ENCODE measurements at regions of chr4 and their contacts with region 1.

Region 1: DNA sequence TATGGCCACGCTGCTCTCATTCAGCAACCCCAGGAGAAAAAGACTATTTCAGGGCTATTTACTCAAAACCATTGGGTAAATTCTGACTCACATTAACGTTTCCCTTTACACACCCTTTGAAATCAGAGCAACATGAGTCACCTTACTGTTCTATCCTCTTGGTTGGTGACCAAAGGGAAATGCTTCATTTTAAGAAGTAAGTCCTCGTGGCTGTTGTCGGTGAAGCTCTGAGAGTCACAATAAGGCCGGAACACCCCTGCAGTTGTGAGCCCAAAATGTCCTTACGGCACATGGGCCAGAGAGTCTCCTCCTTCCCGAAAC is 56.3 kb upstream of the SPRY1 start:
- DNase-seq: peak; percentile 92
- H3K4me3 ChIP-seq: no peak overlapping the region
- H3K27ac ChIP-seq: peak overlapping the region; percentile 90
- H3K4me1 ChIP-seq: peaks cover 58% of the 10 kb centered on the region
- H3K27me3 ChIP-seq: no peaks in the 10 kb centered on the region
- CTCF ChIP-seq: no peak
- POLR2A ChIP-seq: peak; percentile 29

Region 2: DNA sequence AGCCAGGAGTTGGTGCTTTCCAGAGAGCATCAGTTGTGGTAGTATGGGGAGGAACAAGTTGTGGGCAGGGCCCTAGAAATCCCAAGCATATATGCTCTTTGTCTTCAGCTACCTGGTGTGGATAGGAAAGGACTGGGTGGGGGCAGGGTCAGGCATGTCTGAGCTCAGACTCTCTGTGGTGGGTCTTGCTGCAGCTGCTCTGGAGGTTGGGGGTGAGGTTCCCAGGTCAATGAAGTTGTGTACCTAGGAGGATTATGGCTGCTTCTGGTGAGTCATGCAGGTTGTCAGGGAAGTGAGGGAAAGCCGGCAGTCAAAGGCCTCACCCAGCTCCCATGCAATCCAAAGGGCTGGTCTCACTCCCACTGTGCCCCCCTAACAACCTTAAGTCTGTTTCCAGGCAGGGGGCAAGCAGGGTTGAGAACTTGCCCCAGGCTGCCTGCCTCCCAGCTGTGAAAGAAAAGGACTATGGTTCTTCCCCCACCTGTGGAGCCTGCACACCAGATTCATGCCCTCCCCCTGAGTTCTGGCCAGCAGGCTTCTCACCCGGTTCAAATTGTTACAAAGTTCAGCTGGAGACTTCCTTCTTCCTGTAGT is 1929.1 kb before region 1 on chr4:
- CTCF ChIA-PET with region 1: no interaction called
- POLR2A ChIA-PET with region 1: no interaction called
- dilution Hi-C with region 1: no loop called
- intact Hi-C with region 1: no loop called
- DNase-seq: no peak
- H3K4me3 ChIP-seq: no peak overlapping the region
- H3K27ac ChIP-seq: no peak overlapping the region
- H3K4me1 ChIP-seq: no peaks in the 10 kb centered on the region
- H3K27me3 ChIP-seq: no peaks in the 10 kb centered on the region
- CTCF ChIP-seq: no peak
- POLR2A ChIP-seq: no peak

Region 3: GRCh38 chr4:123229286-123229685 is 111.1 kb before region 1 on chr4:
- CTCF ChIA-PET with region 1: no interaction called
- POLR2A ChIA-PET with region 1: no interaction called
- dilution Hi-C with region 1: no loop called
- intact Hi-C with region 1: no loop called
- DNase-seq: no peak
- H3K4me3 ChIP-seq: no peak overlapping the region
- H3K27ac ChIP-seq: no peak overlapping the region
- H3K4me1 ChIP-seq: peaks cover 6% of the 10 kb centered on the region
- H3K27me3 ChIP-seq: no peaks in the 10 kb centered on the region
- CTCF ChIP-seq: no peak
- POLR2A ChIP-seq: no peak

Region 4: GRCh38 chr4:123250843-123251242 is 89.5 kb before region 1 on chr4:
- CTCF ChIA-PET with region 1: no interaction called
- POLR2A ChIA-PET with region 1: no interaction called
- dilution Hi-C with region 1: no loop called
- intact Hi-C with region 1: loop called (anchors 2 kb)
- DNase-seq: peak; percentile 94
- H3K4me3 ChIP-seq: no peak overlapping the region
- H3K27ac ChIP-seq: no peak overlapping the region
- H3K4me1 ChIP-seq: peaks cover 28% of the 10 kb centered on the region
- H3K27me3 ChIP-seq: no peaks in the 10 kb centered on the region
- CTCF ChIP-seq: no peak
- POLR2A ChIP-seq: no peak

Region 5: GRCh38 chr4:123312116-123312515 is 28.2 kb before region 1 on chr4:
- CTCF ChIA-PET with region 1: no interaction called
- POLR2A ChIA-PET with region 1: no interaction called
- dilution Hi-C with region 1: no loop called
- intact Hi-C with region 1: no loop called
- DNase-seq: no peak
- H3K4me3 ChIP-seq: no peak overlapping the region
- H3K27ac ChIP-seq: no peak overlapping the region
- H3K4me1 ChIP-seq: no peaks in the 10 kb centered on the region
- H3K27me3 ChIP-seq: no peaks in the 10 kb centered on the region
- CTCF ChIP-seq: no peak
- POLR2A ChIP-seq: no peak

Region 6: GRCh38 chr4:123361195-123361861 is 21.0 kb after region 1 on chr4:
- CTCF ChIA-PET with region 1: interaction called, 4 read pairs
- POLR2A ChIA-PET with region 1: no interaction called
- dilution Hi-C with region 1: no loop called
- intact Hi-C with region 1: loop called (anchors 1 kb)
- DNase-seq: peak; percentile 93
- H3K4me3 ChIP-seq: no peak overlapping the region
- H3K27ac ChIP-seq: peak overlapping the region; percentile 98
- H3K4me1 ChIP-seq: peaks cover 24% of the 10 kb centered on the region
- H3K27me3 ChIP-seq: no peaks in the 10 kb centered on the region
- CTCF ChIP-seq: no peak
- POLR2A ChIP-seq: no peak

Region 7: GRCh38 chr4:123390846-123391456 is 50.6 kb after region 1 on chr4:
- CTCF ChIA-PET with region 1: interaction called, 3 read pairs
- POLR2A ChIA-PET with region 1: no interaction called
- dilution Hi-C with region 1: no loop called
- intact Hi-C with region 1: loop called (anchors 1 kb)
- DNase-seq: peak; percentile 46
- H3K4me3 ChIP-seq: no peak overlapping the region
- H3K27ac ChIP-seq: no peak overlapping the region
- H3K4me1 ChIP-seq: peaks cover 31% of the 10 kb centered on the region
- H3K27me3 ChIP-seq: no peaks in the 10 kb centered on the region
- CTCF ChIP-seq: peak; percentile 19 to 29
- POLR2A ChIP-seq: no peak

Region 8: DNA sequence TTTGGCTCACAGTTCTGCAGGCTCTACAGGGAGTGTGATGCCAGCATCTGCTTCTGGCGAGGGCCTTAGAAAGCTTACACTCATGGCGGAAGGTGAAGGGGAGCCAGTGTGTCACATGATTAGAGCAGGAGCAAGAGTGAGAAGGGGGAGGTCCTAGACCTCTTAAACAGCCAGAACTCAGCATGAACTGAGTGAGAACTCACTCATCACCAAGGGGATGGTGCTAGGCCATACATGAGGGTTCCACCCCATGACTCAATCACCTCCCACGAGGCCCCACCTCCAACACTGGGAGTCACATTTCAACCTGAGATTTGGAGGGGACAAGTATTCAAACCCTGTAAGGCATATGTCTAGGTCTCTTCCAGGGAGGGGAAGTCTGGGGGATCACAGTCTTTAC is 89.7 kb after region 1 on chr4:
- CTCF ChIA-PET with region 1: no interaction called
- POLR2A ChIA-PET with region 1: no interaction called
- dilution Hi-C with region 1: no loop called
- intact Hi-C with region 1: no loop called
- DNase-seq: no peak
- H3K4me3 ChIP-seq: no peak overlapping the region
- H3K27ac ChIP-seq: no peak overlapping the region
- H3K4me1 ChIP-seq: no peaks in the 10 kb centered on the region
- H3K27me3 ChIP-seq: no peaks in the 10 kb centered on the region
- CTCF ChIP-seq: no peak
- POLR2A ChIP-seq: no peak

Region 9: DNA sequence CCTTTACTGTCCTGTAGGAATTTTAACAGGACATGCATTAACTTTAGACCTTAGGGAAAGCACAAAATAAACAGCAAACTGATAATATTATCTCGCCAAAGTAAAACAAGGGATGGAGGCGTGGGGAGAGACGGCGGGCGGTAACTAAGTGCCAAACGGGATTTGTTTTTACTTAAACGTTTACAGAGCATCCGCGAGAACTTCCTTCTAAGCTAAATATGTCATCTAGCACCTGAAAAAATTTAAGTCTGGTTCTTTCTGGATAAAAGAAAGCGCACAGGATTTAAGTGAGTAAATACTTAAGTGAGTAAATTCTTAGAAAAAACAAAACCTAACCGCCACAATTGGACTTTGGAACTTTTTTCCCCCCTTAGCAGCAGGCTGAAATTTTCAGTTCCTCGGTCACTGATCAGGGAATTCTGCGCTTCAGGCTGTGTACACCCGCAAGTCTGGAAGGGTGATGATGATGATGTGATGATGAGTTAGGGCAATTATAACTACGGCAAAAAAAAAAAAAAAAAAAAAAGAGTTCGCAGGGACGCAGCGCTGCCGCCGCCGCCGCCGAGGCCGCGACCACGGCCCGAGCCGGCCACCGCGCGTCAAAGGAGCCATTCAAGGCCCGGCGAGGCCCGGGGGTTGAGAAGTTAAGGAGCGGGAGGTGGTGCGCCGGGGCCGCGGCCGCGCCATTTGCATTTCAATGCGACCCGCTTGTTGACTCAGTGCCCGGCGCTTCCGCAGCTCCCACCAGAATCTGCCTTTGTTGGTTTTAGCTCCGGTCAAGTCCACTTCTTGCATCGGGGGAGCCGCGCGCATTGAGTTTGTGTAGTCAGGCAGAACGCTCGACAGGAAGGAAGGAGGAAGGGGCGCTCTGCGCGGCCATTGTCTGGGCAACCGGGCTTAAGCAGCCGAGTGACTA is 165.0 kb after region 1 on chr4:
- CTCF ChIA-PET with region 1: no interaction called
- POLR2A ChIA-PET with region 1: no interaction called
- dilution Hi-C with region 1: no loop called
- intact Hi-C with region 1: loop called (anchors 5 kb)
- DNase-seq: peak; percentile 74
- H3K4me3 ChIP-seq: peak overlapping the region; percentile 35 to 72 (median 61)
- H3K27ac ChIP-seq: peak overlapping the region; percentile 65
- H3K4me1 ChIP-seq: peaks cover 16% of the 10 kb centered on the region
- H3K27me3 ChIP-seq: no peaks in the 10 kb centered on the region
- CTCF ChIP-seq: no peak
- POLR2A ChIP-seq: no peak

Measured in endothelial cell of umbilical vein (primary cell).